A549 (cell line): ENCODE measurements at regions of chr11 and their contacts with region 1.

Region 1: GRCh38 chr11:34357701-34358257 is at the start of gene ABTB2:
- DNase-seq: peak; percentile 96 to 97
- ATAC-seq: peak; percentile 78 to 88
- H3K4me3 ChIP-seq: peak within 1 kb of the TSS; percentile 79
- H3K27ac ChIP-seq: peak within 1 kb of the TSS; percentile 79 to 91
- H3K4me1 ChIP-seq: peaks cover 32% of the 10 kb centered on the region
- CTCF ChIP-seq: no peak
- EP300 ChIP-seq: no peak
- POLR2A ChIP-seq: peak; percentile 99
- RAD21 ChIP-seq: peak in 1 of 2 experiments; percentile 17; a peak in 4 of 5 replicates
- polyA plus RNA-seq, gene ABTB2: 8.9 and 10.3 TPM in 2 replicates

Region 2: GRCh38 chr11:34161812-34162499 is 195.8 kb before region 1 on chr11:
- CTCF ChIA-PET with region 1: interaction called, 11 read pairs
- POLR2A ChIA-PET with region 1: interaction called, 5 read pairs
- DNase-seq: no peak
- ATAC-seq: peak in 1 of 2 experiments; percentile 4; a peak in 3 of 6 replicates
- H3K4me3 ChIP-seq: no peak overlapping the region
- H3K27ac ChIP-seq: no peak overlapping the region
- H3K4me1 ChIP-seq: no peaks in the 10 kb centered on the region
- CTCF ChIP-seq: no peak
- EP300 ChIP-seq: no peak
- POLR2A ChIP-seq: no peak
- RAD21 ChIP-seq: no peak

Region 3: GRCh38 chr11:34185926-34186841 is 171.6 kb before region 1 on chr11:
- CTCF ChIA-PET with region 1: interaction called, 25 read pairs
- POLR2A ChIA-PET with region 1: interaction called, 3 read pairs
- DNase-seq: no peak
- ATAC-seq: no peak
- H3K4me3 ChIP-seq: no peak overlapping the region
- H3K27ac ChIP-seq: no peak overlapping the region
- H3K4me1 ChIP-seq: peaks cover 5% of the 10 kb centered on the region; the same call in 2 of the 3 replicates
- CTCF ChIP-seq: no peak
- EP300 ChIP-seq: no peak
- POLR2A ChIP-seq: no peak
- RAD21 ChIP-seq: no peak

Region 4: GRCh38 chr11:34223021-34223813 is 134.6 kb before region 1 on chr11:
- CTCF ChIA-PET with region 1: interaction called, 13 read pairs
- POLR2A ChIA-PET with region 1: no interaction called
- DNase-seq: no peak
- ATAC-seq: peak in 1 of 2 experiments; percentile 23; a peak in 2 of 6 replicates
- H3K4me3 ChIP-seq: no peak overlapping the region
- H3K27ac ChIP-seq: 0 out of 6 replicates have a peak overlapping the region, but pooled peaks of 1 of the 2 experiments have one; percentile 15
- H3K4me1 ChIP-seq: peaks cover 16% of the 10 kb centered on the region
- CTCF ChIP-seq: no peak
- EP300 ChIP-seq: no peak
- POLR2A ChIP-seq: no peak
- RAD21 ChIP-seq: no peak

Region 5: GRCh38 chr11:34318111-34319037 is 39.4 kb before region 1 on chr11:
- CTCF ChIA-PET with region 1: interaction called, 19 read pairs
- POLR2A ChIA-PET with region 1: interaction called, 16 read pairs
- DNase-seq: peak; percentile 69 to 86
- ATAC-seq: peak; percentile 87 to 89
- H3K4me3 ChIP-seq: peak overlapping the region; percentile 11; the same call in 1 of the 3 replicates
- H3K27ac ChIP-seq: peak overlapping the region; percentile 82 to 83
- H3K4me1 ChIP-seq: peaks cover 58% of the 10 kb centered on the region
- CTCF ChIP-seq: no peak
- EP300 ChIP-seq: 0 out of 5 replicates have a peak, but pooled peaks of 1 of the 2 experiments have one; percentile 27
- POLR2A ChIP-seq: no peak
- RAD21 ChIP-seq: peak; percentile 7 to 38; a peak in 2 of 5 replicates

Region 6: DNA sequence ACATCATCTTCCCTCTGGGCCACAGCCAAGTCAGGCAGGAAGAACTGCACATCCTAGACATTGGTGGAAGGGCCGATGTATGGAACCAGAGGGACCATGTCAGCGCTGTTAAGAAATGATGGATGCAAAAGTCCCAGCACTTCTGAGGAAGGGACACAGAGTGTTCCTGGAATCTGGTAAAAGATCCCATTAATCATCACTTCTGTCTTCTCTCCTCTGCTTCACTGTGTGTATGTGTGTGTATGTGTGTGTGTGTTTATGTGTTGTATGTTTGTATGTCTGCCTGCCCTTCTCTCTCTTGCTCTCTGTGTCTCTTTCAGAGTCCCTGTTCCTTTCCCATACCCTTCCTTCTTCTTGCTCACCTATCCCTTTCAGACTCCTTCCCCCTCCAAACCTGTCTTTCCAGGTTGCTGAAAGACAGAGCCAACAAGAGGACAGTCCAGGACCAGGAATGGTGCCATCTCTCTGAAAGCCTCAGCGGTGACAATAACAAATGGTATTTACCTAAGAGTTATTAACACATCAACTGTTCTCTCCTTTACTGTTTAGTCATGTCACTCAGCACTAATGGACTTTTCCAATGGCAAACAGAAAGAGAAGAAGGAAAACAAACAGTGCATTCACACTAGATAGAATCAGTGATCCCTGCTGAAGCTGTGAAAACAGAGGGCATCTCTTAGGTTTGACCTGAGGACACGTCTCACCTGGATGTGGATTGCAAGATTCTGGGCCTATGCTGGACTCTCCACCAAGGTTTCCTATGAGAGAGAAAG is 310.2 kb after region 1 on chr11:
- CTCF ChIA-PET with region 1: no interaction called
- POLR2A ChIA-PET with region 1: no interaction called
- DNase-seq: peak in 1 of 2 experiments; percentile 84
- ATAC-seq: peak; percentile 19 to 90; a peak in 4 of 6 replicates
- H3K4me3 ChIP-seq: no peak overlapping the region
- H3K27ac ChIP-seq: peak overlapping the region; percentile 60 to 74
- H3K4me1 ChIP-seq: peaks cover 38% of the 10 kb centered on the region
- CTCF ChIP-seq: no peak
- EP300 ChIP-seq: peak in 1 of 2 experiments; percentile 20; a peak in 1 of 5 replicates
- POLR2A ChIP-seq: no peak
- RAD21 ChIP-seq: no peak